ENCODE measurements at regions of chr14 and their contacts with region 1.

Region 1: DNA sequence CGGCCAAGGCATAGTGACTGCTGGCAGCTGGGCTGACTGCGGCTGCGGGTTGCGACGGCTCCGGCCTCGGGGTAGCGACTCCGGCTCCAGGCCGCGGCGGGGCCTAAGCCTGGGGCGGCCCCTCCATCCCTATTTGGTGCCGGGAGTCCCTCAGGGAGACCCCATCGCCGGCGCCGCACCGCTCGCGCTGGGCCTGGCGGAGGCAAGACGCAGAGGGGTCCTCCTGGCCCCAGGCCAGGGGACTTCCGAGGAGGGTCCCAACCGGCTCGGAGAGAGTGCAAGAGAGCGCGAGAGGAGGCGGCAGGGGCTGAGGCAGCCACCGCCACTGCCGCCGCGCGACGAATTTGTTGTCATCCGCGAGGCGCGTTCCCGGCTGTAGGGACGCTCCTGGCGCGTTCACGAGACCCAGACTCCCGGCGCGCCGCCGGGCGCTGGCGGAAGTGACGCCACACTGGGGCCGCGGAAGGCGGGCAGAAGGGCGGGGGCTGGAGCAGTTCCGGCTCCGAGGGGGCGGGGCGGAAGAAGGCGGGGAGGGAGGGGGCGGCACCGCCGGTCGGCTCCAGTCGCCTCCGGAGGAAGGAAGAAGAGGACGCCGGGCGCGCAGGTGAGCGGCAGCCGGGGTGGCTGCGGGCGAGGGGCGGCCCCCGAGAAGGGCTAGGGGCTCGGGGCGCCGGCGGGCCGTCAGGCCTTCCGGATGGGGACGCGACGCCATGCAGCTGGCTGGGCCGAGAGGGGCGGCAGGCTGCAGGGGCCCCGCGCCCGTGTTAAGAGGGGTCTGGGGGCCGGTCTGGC is at the starts of genes ATG2B and GSKIP:
- DNase-seq: peak; percentile 85
- ATAC-seq: peak; percentile 85
- H3K4me3 ChIP-seq: peak within 1 kb of the TSS; percentile 96
- H3K27ac ChIP-seq: peak within 1 kb of the TSS; percentile 54
- H3K4me1 ChIP-seq: peaks cover 6% of the 10 kb centered on the region
- H3K27me3 ChIP-seq: no peaks in the 10 kb centered on the region
- CTCF ChIP-seq: no peak
- POLR2A ChIP-seq: peak; percentile 72
- RAD21 ChIP-seq: no peak
- total RNA-seq, gene ATG2B: 20.6 and 22.0 TPM in 2 replicates
- total RNA-seq, gene GSKIP: 22.0 and 34.7 TPM in 2 replicates

Region 2: GRCh38 chr14:96380735-96381134 is 17.6 kb after region 1 on chr14:
- CTCF ChIA-PET with region 1: no interaction called
- POLR2A ChIA-PET with region 1: interaction called, 11 read pairs
- dilution Hi-C with region 1: no loop called
- in situ Hi-C with region 1: no loop called
- intact Hi-C with region 1: no loop called
- DNase-seq: no peak
- ATAC-seq: no peak
- H3K4me3 ChIP-seq: no peak overlapping the region
- H3K27ac ChIP-seq: no peak overlapping the region
- H3K4me1 ChIP-seq: no peaks in the 10 kb centered on the region
- H3K27me3 ChIP-seq: no peaks in the 10 kb centered on the region
- CTCF ChIP-seq: no peak
- POLR2A ChIP-seq: no peak
- RAD21 ChIP-seq: no peak